ENCODE measurements at regions of chr10 and their contacts with region 1.

Region 1: GRCh38 chr10:89426230-89426868 is 12.0 kb downstream of the IFIT5 start:
- DNase-seq: no peak
- H3K4me3 ChIP-seq: no peak overlapping the region
- CTCF ChIP-seq: peak; percentile 49

Region 2: DNA sequence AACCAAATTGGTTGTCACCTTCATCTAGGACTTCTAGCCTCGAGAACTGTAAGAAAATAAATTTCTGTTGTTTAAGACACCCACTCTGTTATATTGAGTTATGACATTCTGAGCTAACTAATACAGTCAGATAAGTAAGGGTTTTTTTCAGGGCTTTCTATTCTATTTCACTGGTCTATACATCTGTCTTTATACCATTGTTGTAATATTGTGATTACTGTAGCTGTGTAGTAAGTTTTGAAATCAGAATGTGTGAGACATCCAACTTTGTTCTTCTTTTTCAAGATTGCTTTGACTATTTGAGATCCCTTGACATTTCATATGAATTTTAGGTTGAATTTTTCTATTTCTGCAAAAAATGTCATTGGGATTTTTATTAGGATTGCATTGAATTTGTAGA is 26.4 kb before region 1 on chr10:
- CTCF ChIA-PET with region 1: no interaction called
- POLR2A ChIA-PET with region 1: no interaction called
- DNase-seq: no peak
- H3K4me3 ChIP-seq: no peak overlapping the region
- CTCF ChIP-seq: no peak

Region 3: GRCh38 chr10:89414146-89414878 is 12.0 kb before region 1 on chr10 and contains the start of gene IFIT5:
- CTCF ChIA-PET with region 1: interaction called, 13 read pairs
- POLR2A ChIA-PET with region 1: no interaction called
- DNase-seq: no peak
- H3K4me3 ChIP-seq: peak within 1 kb of the TSS; percentile 77
- CTCF ChIP-seq: no peak

Region 4: GRCh38 chr10:89553064-89553734 is 126.8 kb after region 1 on chr10:
- CTCF ChIA-PET with region 1: interaction called, 62 read pairs
- POLR2A ChIA-PET with region 1: no interaction called
- DNase-seq: peak; percentile 81
- H3K4me3 ChIP-seq: no peak overlapping the region
- CTCF ChIP-seq: no peak